ENCODE measurements at regions of chr3 and their contacts with region 1.

Region 1: GRCh38 chr3:152309535-152310307 is 41.0 kb downstream of the MBNL1 start:
- DNase-seq: peak in 1 of 35 experiments; percentile 47
- ATAC-seq: peak; percentile 72 to 85 (median 78)
- H3K4me3 ChIP-seq: no peak overlapping the region
- H3K4me3 Mint-ChIP-seq: peak overlapping the region in 2 of 3 donors; percentile 7 to 56
- H3K27ac ChIP-seq: peak overlapping the region; percentile 48
- H3K27ac Mint-ChIP-seq: peak overlapping the region; percentile 42 to 79
- H3K4me1 ChIP-seq: peaks cover 26 to 38% of the 10 kb centered on the region in 2 experiments
- H3K4me1 Mint-ChIP-seq: peaks cover 79 to 85% (median 81%) of the 10 kb centered on the region in 3 donors
- H3K27me3 ChIP-seq: no peaks in the 10 kb centered on the region
- H3K27me3 Mint-ChIP-seq: no peaks in the 10 kb centered on the region

Region 2: GRCh38 chr3:152281133-152281713 is 28.5 kb before region 1 on chr3:
- CTCF ChIA-PET with region 1: interaction called in 1 of 2 experiments, 9 read pairs
- POLR2A ChIA-PET with region 1: interaction called, 5 to 16 read pairs
- DNase-seq: no peak
- ATAC-seq: peak in 1 of 4 experiments; percentile 4
- H3K4me3 ChIP-seq: peak overlapping the region; percentile 13 to 38
- H3K4me3 Mint-ChIP-seq: peak overlapping the region; percentile 52 to 69 (median 64)
- H3K27ac ChIP-seq: peak overlapping the region; percentile 65
- H3K27ac Mint-ChIP-seq: peak overlapping the region; percentile 73 to 78
- H3K4me1 ChIP-seq: peaks cover 14 to 83% of the 10 kb centered on the region in 2 experiments
- H3K4me1 Mint-ChIP-seq: peaks cover 82 to 93% (median 84%) of the 10 kb centered on the region in 3 donors
- H3K27me3 ChIP-seq: no peaks in the 10 kb centered on the region
- H3K27me3 Mint-ChIP-seq: no peaks in the 10 kb centered on the region

Region 3: GRCh38 chr3:152291649-152292066 is 18.1 kb before region 1 on chr3:
- CTCF ChIA-PET with region 1: interaction called, 4 to 8 read pairs
- POLR2A ChIA-PET with region 1: interaction called, 7 to 17 read pairs
- DNase-seq: peak in 1 of 35 experiments; percentile 39
- ATAC-seq: peak; percentile 33 to 55 (median 51)
- H3K4me3 ChIP-seq: no peak overlapping the region
- H3K4me3 Mint-ChIP-seq: peak overlapping the region; percentile 47 to 67 (median 62)
- H3K27ac ChIP-seq: peak overlapping the region; percentile 40
- H3K27ac Mint-ChIP-seq: peak overlapping the region; percentile 85 to 87
- H3K4me1 ChIP-seq: peaks cover 37 to 52% of the 10 kb centered on the region in 2 experiments
- H3K4me1 Mint-ChIP-seq: peaks cover 85 to 90% (median 90%) of the 10 kb centered on the region in 3 donors
- H3K27me3 ChIP-seq: no peaks in the 10 kb centered on the region
- H3K27me3 Mint-ChIP-seq: no peaks in the 10 kb centered on the region

Region 4: DNA sequence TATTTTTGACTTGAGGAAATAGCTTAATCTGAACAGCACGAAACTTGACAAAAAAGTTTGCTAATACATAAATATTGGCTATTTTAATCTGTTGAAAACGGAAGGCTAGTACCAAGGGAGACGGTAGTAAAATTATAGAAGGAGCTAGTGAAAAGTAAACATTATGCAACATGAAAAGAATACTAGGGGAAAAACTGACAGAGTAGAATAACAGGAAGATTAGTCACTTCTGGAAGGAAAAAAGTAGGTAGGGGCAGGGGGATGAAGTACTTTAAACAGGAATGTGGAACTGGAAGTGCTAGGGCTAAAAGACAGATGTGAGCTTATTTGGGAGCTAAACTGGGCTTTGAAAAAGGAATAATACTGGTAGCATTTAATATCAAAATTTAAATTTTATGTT is 19.1 kb after region 1 on chr3:
- CTCF ChIA-PET with region 1: interaction called, 3 to 13 read pairs
- POLR2A ChIA-PET with region 1: interaction called, 3 to 5 read pairs
- DNase-seq: no peak
- ATAC-seq: no peak
- H3K4me3 ChIP-seq: no peak overlapping the region
- H3K4me3 Mint-ChIP-seq: peak overlapping the region; percentile 1 to 28 (median 3)
- H3K27ac ChIP-seq: peak overlapping the region; percentile 15
- H3K27ac Mint-ChIP-seq: peak overlapping the region; percentile 83 to 87
- H3K4me1 ChIP-seq: peaks cover 25 to 26% of the 10 kb centered on the region in 2 experiments
- H3K4me1 Mint-ChIP-seq: peaks cover 82 to 90% (median 87%) of the 10 kb centered on the region in 3 donors
- H3K27me3 ChIP-seq: no peaks in the 10 kb centered on the region
- H3K27me3 Mint-ChIP-seq: no peaks in the 10 kb centered on the region